H1 (cell line): ENCODE measurements at regions of chr3 and their contacts with region 1.

Region 1: GRCh38 chr3:117019082-117019713 is 309.6 kb downstream of the TUSC7 start:
- DNase-seq: peak; percentile 50 to 67
- H3K4me3 ChIP-seq: no peak overlapping the region
- H3K27ac ChIP-seq: no peak overlapping the region
- H3K4me1 ChIP-seq: no peaks in the 10 kb centered on the region
- H3K27me3 ChIP-seq: no peaks in the 10 kb centered on the region
- CTCF ChIP-seq: peak; percentile 41 to 89 (median 83)
- EP300 ChIP-seq: no peak
- POLR2A ChIP-seq: no peak
- RAD21 ChIP-seq: peak; percentile 97 to 98

Region 2: DNA sequence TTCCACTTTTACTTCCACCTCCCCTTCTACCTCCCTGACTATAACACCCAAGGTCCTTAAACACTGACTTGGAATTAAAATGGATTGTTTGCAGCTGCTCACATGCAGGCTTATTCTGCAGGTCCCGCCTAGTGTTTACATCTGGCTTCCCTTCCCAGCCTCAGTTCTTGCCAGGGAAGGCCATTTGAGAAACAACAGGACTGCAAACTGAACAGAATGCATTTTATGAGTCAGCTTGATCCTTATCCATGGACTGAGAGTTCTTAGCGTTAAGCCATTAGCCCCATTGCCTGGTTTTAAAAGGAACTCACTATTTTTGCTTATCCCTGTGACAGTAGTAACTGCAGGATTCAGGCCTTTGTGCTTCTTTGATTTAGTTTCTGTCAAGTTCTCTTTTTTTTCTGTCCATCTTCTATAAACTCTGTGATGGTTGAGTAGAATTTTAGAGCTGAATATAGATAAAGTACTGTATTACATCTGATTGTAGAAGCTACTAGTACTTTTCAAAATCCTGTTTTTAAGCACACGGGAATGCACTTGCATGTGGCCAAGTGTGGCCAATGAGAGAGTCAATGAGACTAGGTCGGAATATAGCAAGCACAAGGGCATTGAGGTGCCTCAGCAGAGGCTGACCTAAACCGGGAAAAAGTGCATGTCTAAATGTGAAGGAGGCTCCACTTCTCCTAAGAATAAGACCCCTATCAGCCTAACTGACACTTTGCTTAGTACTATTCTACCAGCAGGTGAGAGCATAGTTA is 203.2 kb before region 1 on chr3:
- CTCF ChIA-PET with region 1: no interaction called
- POLR2A ChIA-PET with region 1: no interaction called
- DNase-seq: no peak
- H3K4me3 ChIP-seq: no peak overlapping the region
- H3K27ac ChIP-seq: no peak overlapping the region
- H3K4me1 ChIP-seq: peaks cover 0 to 12% (median 2%) of the 10 kb centered on the region in 4 experiments; a peak in 3 of 7 replicates
- H3K27me3 ChIP-seq: no peaks in the 10 kb centered on the region
- CTCF ChIP-seq: no peak
- EP300 ChIP-seq: no peak
- POLR2A ChIP-seq: no peak
- RAD21 ChIP-seq: no peak

Region 3: DNA sequence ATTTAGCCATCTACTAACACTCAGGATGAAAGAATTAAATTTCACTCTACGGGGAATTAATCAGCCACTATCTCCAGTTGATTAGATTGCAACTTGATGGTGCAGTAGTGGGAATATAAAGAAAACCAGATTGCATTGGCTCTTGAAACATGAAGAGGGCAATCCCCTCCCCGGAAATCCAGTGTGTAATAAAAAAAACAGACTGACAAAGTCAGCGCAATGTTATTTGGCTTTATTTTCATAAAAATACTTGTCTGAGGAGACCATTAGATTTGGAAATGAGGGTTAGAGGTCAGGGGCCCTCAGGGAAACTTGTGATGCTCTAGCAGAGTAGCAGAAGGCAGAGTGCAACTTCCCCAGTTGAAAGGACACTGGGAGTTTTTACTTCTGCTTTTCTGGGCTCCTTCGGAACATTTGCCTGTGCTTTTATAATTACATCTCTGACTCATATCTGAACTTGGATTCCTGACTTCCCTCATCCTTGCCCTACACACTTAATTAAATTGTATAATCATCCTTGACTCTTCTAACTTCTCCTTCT is 17.1 kb after region 1 on chr3:
- CTCF ChIA-PET with region 1: interaction called, 10 read pairs
- POLR2A ChIA-PET with region 1: no interaction called
- DNase-seq: no peak
- H3K4me3 ChIP-seq: no peak overlapping the region
- H3K27ac ChIP-seq: no peak overlapping the region
- H3K4me1 ChIP-seq: peaks cover 0 to 3% (median 0%) of the 10 kb centered on the region in 4 experiments; a peak in 2 of 7 replicates
- H3K27me3 ChIP-seq: no peaks in the 10 kb centered on the region
- CTCF ChIP-seq: no peak
- EP300 ChIP-seq: no peak
- POLR2A ChIP-seq: no peak
- RAD21 ChIP-seq: no peak

Region 4: GRCh38 chr3:117074826-117075225 is 55.6 kb after region 1 on chr3:
- CTCF ChIA-PET with region 1: no interaction called
- POLR2A ChIA-PET with region 1: no interaction called
- DNase-seq: no peak
- H3K4me3 ChIP-seq: no peak overlapping the region
- H3K27ac ChIP-seq: no peak overlapping the region
- H3K4me1 ChIP-seq: peaks cover 0 to under 1% (median 0%) of the 10 kb centered on the region in 4 experiments; a peak in 1 of 7 replicates
- H3K27me3 ChIP-seq: no peaks in the 10 kb centered on the region
- CTCF ChIP-seq: no peak
- EP300 ChIP-seq: no peak
- POLR2A ChIP-seq: no peak
- RAD21 ChIP-seq: no peak

Region 5: DNA sequence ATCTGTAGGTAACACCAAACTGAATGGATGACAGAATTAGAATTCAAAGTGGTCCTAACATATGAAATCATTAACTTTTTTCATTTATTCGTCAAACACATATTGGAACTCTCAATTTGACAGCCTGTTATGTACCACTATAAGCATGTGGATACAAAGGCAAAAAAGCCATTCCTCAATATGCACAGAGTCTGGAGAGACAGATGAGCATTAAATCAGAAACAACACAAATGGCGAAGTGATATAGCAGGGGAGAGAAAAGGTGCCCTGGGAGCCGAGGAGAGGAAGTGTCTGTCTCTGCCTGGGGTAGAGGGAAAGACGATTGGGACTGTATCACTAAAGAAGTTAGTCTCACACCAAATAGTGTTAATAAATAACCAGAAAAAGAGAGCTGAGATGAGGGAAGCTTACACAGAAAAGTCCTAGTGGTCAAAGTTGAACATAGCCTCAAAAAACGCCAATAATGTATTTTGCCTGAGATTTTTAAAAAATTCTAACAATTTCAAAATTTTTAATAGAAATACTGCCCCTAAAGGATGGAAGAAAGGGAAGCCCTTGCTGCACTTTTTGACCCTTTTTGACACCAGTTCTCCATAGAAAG is 107.8 kb after region 1 on chr3:
- CTCF ChIA-PET with region 1: no interaction called
- POLR2A ChIA-PET with region 1: no interaction called
- DNase-seq: no peak
- H3K4me3 ChIP-seq: no peak overlapping the region
- H3K27ac ChIP-seq: no peak overlapping the region
- H3K4me1 ChIP-seq: no peaks in the 10 kb centered on the region
- H3K27me3 ChIP-seq: no peaks in the 10 kb centered on the region
- CTCF ChIP-seq: no peak
- EP300 ChIP-seq: no peak
- POLR2A ChIP-seq: no peak
- RAD21 ChIP-seq: no peak